CD8-positive, alpha-beta T cell (primary cell): ENCODE measurements at regions of chr11 and their contacts with region 1.

Region 1: DNA sequence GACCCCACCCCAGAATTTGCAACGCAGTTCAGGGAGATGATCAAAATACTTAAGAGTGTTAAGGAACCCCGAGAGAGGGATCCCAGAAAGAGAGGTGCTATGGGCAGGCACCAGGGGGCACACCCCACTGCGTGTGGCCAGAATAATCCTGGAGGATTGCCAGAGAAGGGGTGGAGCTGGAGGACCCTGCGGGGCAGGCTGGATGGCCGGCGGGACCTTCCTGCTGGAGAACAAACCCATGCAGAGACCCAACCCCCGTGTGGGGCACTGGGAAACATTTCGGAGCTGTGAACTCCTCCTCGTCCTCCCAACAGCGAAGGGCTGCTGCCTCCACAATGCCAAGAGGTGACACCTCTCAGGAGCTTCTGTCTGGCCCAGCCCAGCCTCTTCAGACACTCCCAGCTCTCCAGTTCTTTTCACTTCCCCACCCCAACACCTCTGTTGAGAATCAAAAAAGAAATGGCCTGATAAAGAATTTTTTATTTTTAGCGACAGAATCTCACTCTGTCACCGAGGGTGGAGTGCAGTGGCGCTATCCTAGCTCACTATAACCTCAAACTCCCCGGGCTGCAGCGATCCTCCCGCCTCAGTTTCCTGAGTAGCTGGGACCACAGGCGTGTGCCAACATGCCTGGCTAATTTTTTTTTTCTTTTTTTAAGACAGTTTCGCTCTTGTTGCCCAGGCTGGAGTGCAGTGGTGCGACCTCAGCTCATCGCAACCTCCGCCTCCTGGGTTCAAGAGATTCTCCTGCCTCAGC is 25.6 kb downstream of the RHOD start:
- DNase-seq: peak in 3 of 9 experiments; percentile 10 to 53 (median 44)
- ATAC-seq: peak; percentile 15
- H3K4me3 ChIP-seq: no peak overlapping the region
- H3K4me3 Mint-ChIP-seq: peak overlapping the region; percentile 59
- H3K27ac ChIP-seq: no peak overlapping the region
- H3K27ac Mint-ChIP-seq: no peak overlapping the region
- H3K4me1 ChIP-seq: peaks cover 10% of the 10 kb centered on the region
- H3K4me1 Mint-ChIP-seq: peaks cover 13% of the 10 kb centered on the region
- H3K27me3 ChIP-seq: peaks cover 0 to 3% of the 10 kb centered on the region in 2 experiments
- H3K27me3 Mint-ChIP-seq: peaks cover 5% of the 10 kb centered on the region
- CTCF ChIP-seq: no peak

Region 2: DNA sequence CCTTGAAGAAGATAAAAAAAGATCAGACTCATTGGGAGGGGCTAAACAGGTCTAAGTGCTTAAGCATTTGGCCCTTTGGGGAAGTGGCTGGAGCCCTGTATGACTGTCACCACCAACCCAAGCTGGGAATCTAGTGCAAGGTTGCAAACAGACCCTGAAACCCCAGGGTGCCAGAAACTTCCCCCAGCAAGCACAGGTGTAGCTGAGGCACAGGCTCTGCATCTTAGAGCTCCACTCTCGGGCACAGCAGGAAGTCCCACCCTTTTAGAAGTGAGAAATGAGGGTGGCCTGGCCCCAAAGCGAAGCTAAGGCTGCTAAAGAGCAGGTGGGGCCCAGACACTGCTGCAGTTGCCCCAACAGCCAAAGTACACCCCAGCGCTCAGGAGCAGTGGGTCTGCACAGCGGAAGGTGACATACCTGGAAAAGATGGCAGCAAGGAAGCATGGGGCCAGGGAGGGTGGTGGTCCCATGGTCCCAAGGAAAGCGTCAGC is 31.1 kb after region 1 on chr11:
- CTCF ChIA-PET with region 1: interaction called, 28 read pairs
- POLR2A ChIA-PET with region 1: interaction called, 3 read pairs
- intact Hi-C with region 1: loop called (anchors 2 to 5 kb)
- DNase-seq: peak in 6 of 9 experiments; percentile 33 to 68 (median 47)
- ATAC-seq: peak; percentile 52
- H3K4me3 ChIP-seq: no peak overlapping the region
- H3K4me3 Mint-ChIP-seq: peak overlapping the region; percentile 49
- H3K27ac ChIP-seq: peak overlapping the region; percentile 10 to 53
- H3K27ac Mint-ChIP-seq: peak overlapping the region; percentile 90
- H3K4me1 ChIP-seq: peaks cover 21% of the 10 kb centered on the region
- H3K4me1 Mint-ChIP-seq: peaks cover 21% of the 10 kb centered on the region
- H3K27me3 ChIP-seq: no peaks in the 10 kb centered on the region
- H3K27me3 Mint-ChIP-seq: no peaks in the 10 kb centered on the region
- CTCF ChIP-seq: no peak

Region 3: GRCh38 chr11:67136156-67136555 is 53.9 kb after region 1 on chr11:
- CTCF ChIA-PET with region 1: no interaction called
- POLR2A ChIA-PET with region 1: no interaction called
- intact Hi-C with region 1: no loop called
- DNase-seq: no peak
- ATAC-seq: no peak
- H3K4me3 ChIP-seq: no peak overlapping the region
- H3K4me3 Mint-ChIP-seq: no peak overlapping the region
- H3K27ac ChIP-seq: no peak overlapping the region
- H3K27ac Mint-ChIP-seq: peak overlapping the region; percentile 6
- H3K4me1 ChIP-seq: no peaks in the 10 kb centered on the region
- H3K4me1 Mint-ChIP-seq: peaks cover 35% of the 10 kb centered on the region
- H3K27me3 ChIP-seq: no peaks in the 10 kb centered on the region
- H3K27me3 Mint-ChIP-seq: no peaks in the 10 kb centered on the region
- CTCF ChIP-seq: no peak

Region 4: GRCh38 chr11:67146516-67147226 is 64.5 kb after region 1 on chr11:
- CTCF ChIA-PET with region 1: interaction called, 13 read pairs
- POLR2A ChIA-PET with region 1: no interaction called
- intact Hi-C with region 1: no loop called
- DNase-seq: no peak
- ATAC-seq: no peak
- H3K4me3 ChIP-seq: no peak overlapping the region
- H3K4me3 Mint-ChIP-seq: no peak overlapping the region
- H3K27ac ChIP-seq: no peak overlapping the region
- H3K27ac Mint-ChIP-seq: no peak overlapping the region
- H3K4me1 ChIP-seq: no peaks in the 10 kb centered on the region
- H3K4me1 Mint-ChIP-seq: peaks cover 13% of the 10 kb centered on the region
- H3K27me3 ChIP-seq: no peaks in the 10 kb centered on the region
- H3K27me3 Mint-ChIP-seq: no peaks in the 10 kb centered on the region
- CTCF ChIP-seq: no peak

Region 5: GRCh38 chr11:67239783-67240575 is 157.8 kb after region 1 on chr11:
- CTCF ChIA-PET with region 1: no interaction called
- POLR2A ChIA-PET with region 1: no interaction called
- intact Hi-C with region 1: loop called in 1 of 2 experiments (anchors 10 kb)
- DNase-seq: peak; percentile 89 to 99 (median 95)
- ATAC-seq: peak; percentile 89
- H3K4me3 ChIP-seq: peak overlapping the region; percentile 87 to 98
- H3K4me3 Mint-ChIP-seq: peak overlapping the region; percentile 96
- H3K27ac ChIP-seq: peak overlapping the region; percentile 95 to 96
- H3K27ac Mint-ChIP-seq: peak overlapping the region; percentile 100
- H3K4me1 ChIP-seq: peaks cover 40% of the 10 kb centered on the region
- H3K4me1 Mint-ChIP-seq: peaks cover 56% of the 10 kb centered on the region
- H3K27me3 ChIP-seq: no peaks in the 10 kb centered on the region
- H3K27me3 Mint-ChIP-seq: no peaks in the 10 kb centered on the region
- CTCF ChIP-seq: no peak